Sigmoid colon (tissue), 7 donors: ENCODE measurements at regions of chr10 and their contacts with region 1.

Region 1: GRCh38 chr10:73110345-73110849 is at the start of gene NUDT13:
- DNase-seq: peak; percentile 80
- H3K4me3 ChIP-seq: peak within 1 kb of the TSS; percentile 27 to 57 (median 48)
- H3K27ac ChIP-seq: peak within 1 kb of the TSS; percentile 79 to 90 (median 82)
- H3K4me1 ChIP-seq: no peaks in the 10 kb centered on the region
- H3K27me3 ChIP-seq: no peaks in the 10 kb centered on the region
- CTCF ChIP-seq: no peak
- EP300 ChIP-seq: no peak
- POLR2A ChIP-seq: no peak
- total RNA-seq, gene NUDT13: 2.1 to 5.4 (median 2.9) TPM

Region 2: DNA sequence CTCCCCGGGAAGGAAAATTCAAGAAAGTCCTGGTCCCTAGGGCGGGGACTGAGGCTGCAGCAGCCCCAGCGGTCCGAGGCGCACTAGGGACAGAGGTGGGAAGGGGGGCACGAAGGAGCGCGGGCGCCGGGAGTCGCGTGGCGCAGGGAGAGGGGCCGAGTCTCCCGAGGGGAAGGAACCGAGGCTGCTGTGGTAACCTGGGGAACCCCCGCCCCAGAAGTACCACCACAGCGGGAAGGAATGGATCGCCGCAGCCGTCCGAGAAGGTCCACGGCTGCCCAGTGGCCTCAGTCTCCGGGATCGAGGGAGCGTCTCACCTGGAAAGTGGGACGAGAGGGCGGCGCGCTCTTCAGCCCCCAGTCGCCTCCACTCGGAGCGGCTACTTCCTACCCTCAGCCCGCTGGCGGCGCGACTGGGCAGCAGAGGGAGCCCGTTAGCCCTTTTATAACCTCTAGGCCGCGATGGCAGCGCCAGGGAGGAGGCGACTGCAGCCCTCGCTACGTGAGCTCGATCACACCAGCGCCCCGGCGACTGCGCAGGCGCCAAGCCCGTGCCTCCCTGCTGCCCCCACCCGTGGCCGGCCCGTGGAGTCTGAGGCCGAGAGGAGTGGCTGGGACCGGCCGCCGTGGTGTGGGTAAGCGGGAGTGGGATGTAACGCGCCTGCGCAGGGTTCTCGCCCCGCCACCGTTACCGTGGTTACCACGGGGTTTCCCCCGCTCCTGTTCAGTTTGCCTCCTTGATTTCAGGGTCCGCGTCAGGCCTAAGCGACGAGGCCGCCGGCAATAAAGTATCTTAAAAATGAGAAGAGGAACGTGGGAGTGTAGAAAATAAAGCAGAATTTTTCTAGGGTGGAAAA is 13.7 kb before region 1 on chr10 and contains the start of gene P4HA1:
- intact Hi-C with region 1: loop called (anchors 2 kb)
- DNase-seq: peak; percentile 100
- H3K4me3 ChIP-seq: peak within 1 kb of the TSS; percentile 61 to 88 (median 75)
- H3K27ac ChIP-seq: peak within 1 kb of the TSS; percentile 90 to 95 (median 93)
- H3K4me1 ChIP-seq: peaks cover 0 to 22% (median 18%) of the 10 kb centered on the region in 4 donors
- H3K27me3 ChIP-seq: no peaks in the 10 kb centered on the region
- CTCF ChIP-seq: peak in 3 of 4 experiments; percentile 54 to 73 (median 59)
- EP300 ChIP-seq: peak in 2 of 4 donors; percentile 24 to 65
- POLR2A ChIP-seq: peak; percentile 86 to 94
- total RNA-seq, gene P4HA1: 15.2 to 25.0 (median 20.0) TPM